ENCODE measurements at regions of chr17 and their contacts with region 1.

Region 1: DNA sequence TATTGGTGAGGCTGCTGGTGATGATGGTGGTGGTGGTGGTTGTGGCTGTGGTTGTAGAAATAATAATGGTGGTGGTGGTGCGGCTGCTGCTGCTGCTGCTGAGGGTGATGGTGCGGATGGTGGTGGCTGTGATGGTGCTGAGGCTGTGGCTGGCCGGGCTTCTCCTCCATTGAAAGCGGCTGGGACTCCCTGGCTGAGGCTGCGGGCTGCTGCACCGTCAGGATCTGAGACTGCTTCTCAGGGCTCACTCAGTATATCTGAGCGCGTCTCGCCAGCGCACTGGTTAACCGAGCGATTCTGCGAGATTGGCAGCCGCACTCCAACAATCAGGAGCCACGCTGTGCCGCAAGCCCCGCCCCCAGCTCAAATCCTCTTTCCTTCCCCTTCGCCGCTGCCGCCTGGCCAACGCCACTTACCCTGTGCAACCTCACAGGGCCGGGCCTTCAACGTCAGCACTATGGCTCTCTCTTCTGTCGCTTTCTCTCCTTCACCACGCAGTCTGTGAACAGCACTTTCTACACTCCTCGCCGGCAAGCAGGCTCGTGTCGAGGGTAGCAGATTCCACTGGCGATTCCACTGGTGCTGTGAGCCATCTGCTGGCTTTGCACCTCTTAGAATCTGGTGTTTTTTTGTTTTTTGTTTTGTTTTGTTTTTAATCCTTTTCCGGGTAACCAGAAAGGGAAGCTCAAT is at the start of gene NUFIP2:
- DNase-seq: peak; percentile 99 to 100 (median 99)
- H3K4me3 ChIP-seq: peak within 1 kb of the TSS; percentile 53
- H3K27ac ChIP-seq: peak within 1 kb of the TSS; percentile 98
- H3K4me1 ChIP-seq: peaks cover 2% of the 10 kb centered on the region
- H3K27me3 ChIP-seq: no peaks in the 10 kb centered on the region
- CTCF ChIP-seq: peak in 1 of 3 donors; percentile 26
- EP300 ChIP-seq: no peak
- POLR2A ChIP-seq: peak; percentile 99
- total RNA-seq, gene NUFIP2: 25.0 to 52.4 (median 37.9) TPM

Region 2: DNA sequence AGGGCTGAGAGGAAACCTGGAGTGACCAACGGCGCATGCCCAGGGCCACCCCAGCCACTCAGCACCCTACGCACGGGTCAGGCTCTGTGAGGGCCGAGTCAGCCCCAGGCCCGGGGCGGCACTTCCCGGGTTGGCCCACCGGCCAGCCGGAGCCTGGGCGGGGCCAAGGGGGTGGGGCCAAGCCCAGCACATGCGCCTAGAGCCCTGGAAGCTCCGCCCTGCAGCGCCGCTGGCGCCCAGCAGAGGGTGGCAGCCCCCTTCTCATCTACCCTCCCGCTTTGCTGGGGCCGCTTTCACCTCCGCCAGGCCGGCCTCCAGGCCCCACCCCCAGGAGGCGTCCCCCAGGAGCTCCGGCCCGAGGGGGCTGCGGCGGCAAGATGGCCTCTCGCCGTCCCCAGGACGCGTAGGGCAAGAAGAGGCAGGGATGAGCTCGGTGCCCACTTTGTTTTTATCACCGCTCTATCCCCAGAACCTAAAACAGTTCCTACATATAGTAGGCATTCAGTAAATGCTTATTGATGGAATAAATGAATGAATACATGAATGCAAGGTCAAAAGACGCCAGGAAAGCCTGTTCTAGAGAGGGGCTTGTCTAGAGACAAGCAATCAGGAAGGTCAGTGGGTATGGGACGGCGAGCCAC is 145.1 kb before region 1 on chr17:
- intact Hi-C with region 1: loop called in 2 of 4 experiments (anchors 10 kb)
- DNase-seq: peak; percentile 90 to 97 (median 94)
- H3K4me3 ChIP-seq: peak overlapping the region; percentile 54
- H3K27ac ChIP-seq: peak overlapping the region; percentile 53 to 77
- H3K4me1 ChIP-seq: peaks cover 7% of the 10 kb centered on the region
- H3K27me3 ChIP-seq: no peaks in the 10 kb centered on the region
- CTCF ChIP-seq: peak; percentile 97
- EP300 ChIP-seq: no peak
- POLR2A ChIP-seq: peak; percentile 5

Region 3: DNA sequence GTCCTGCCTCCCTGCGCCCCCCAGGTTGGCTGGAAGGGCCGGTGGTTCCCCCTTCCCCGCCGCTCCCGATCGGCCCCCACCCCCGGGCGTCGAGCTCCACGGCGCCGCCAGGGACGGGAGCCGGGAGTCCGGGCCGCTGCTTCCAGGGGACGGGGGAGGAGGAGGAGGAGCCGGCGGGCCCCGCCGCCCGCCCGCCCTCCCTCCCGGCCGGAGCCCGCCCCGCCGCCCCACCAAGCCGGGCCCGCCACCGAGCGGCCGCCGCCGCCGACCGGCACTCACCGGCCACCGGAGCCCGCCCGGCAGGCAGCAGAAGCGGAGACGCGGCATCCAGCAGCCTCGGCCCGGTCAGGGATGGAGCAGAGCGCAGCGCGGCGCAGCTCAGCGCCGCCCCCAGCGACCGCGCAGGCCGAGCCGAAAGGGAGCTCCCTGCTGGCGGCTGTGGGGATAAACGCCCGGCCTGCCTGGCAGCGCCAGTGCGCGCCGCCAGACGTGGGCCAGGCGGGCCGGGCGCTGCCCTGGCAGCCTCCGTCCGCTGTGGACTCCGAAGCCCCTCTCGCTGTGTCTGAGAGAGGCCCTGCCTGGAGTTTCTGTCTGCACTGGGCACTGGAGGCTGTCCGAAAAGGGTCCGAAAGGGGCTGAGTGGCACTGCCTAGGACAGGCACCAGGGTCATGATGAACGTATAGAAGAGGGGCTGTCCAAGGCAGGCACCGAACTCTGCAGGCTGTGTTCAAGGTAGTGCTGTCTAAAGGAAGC is 113.8 kb before region 1 on chr17 and contains the start of gene MYO18A:
- intact Hi-C with region 1: loop called in 1 of 4 experiments (anchors 10 kb)
- DNase-seq: peak; percentile 74 to 87 (median 80)
- H3K4me3 ChIP-seq: peak within 1 kb of the TSS; percentile 71
- H3K27ac ChIP-seq: peak within 1 kb of the TSS; percentile 74 to 78
- H3K4me1 ChIP-seq: peaks cover 21% of the 10 kb centered on the region
- H3K27me3 ChIP-seq: no peaks in the 10 kb centered on the region
- CTCF ChIP-seq: peak; percentile 70 to 97 (median 94)
- EP300 ChIP-seq: no peak
- POLR2A ChIP-seq: peak; percentile 39
- total RNA-seq, gene MYO18A: 23.0 to 53.9 (median 35.3) TPM

Region 4: GRCh38 chr17:29252101-29252866 is 41.8 kb before region 1 on chr17:
- intact Hi-C with region 1: loop called in 1 of 4 experiments (anchors 5 kb)
- DNase-seq: no peak
- H3K4me3 ChIP-seq: no peak overlapping the region
- H3K27ac ChIP-seq: no peak overlapping the region
- H3K4me1 ChIP-seq: no peaks in the 10 kb centered on the region
- H3K27me3 ChIP-seq: no peaks in the 10 kb centered on the region
- CTCF ChIP-seq: no peak
- EP300 ChIP-seq: no peak
- POLR2A ChIP-seq: no peak

Region 5: GRCh38 chr17:29357821-29358232 is 63.8 kb after region 1 on chr17:
- intact Hi-C with region 1: no loop called
- DNase-seq: no peak
- H3K4me3 ChIP-seq: no peak overlapping the region
- H3K27ac ChIP-seq: no peak overlapping the region
- H3K4me1 ChIP-seq: no peaks in the 10 kb centered on the region
- H3K27me3 ChIP-seq: no peaks in the 10 kb centered on the region
- CTCF ChIP-seq: no peak
- EP300 ChIP-seq: no peak
- POLR2A ChIP-seq: no peak

Region 6: DNA sequence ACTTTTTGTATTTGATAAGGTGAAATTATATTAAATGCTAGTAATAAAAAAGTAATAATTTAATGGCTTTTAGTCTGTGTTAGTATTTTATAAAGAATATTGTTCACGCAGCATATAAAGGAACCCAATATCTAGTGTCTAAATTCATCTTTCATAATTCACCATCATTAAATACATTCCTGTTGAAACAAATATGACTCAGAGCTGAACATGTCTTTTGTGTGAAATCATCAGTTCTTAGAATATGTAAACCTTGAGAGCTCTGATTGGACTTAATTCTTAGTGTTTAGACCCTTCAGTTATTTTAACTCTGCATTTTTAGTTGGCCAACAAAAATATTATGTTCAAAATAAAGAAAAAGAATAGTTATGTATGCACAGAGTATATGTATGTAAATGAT is 201.0 kb after region 1 on chr17:
- intact Hi-C with region 1: no loop called
- DNase-seq: no peak
- H3K4me3 ChIP-seq: no peak overlapping the region
- H3K27ac ChIP-seq: no peak overlapping the region
- H3K4me1 ChIP-seq: no peaks in the 10 kb centered on the region
- H3K27me3 ChIP-seq: no peaks in the 10 kb centered on the region
- CTCF ChIP-seq: no peak
- EP300 ChIP-seq: no peak
- POLR2A ChIP-seq: no peak